ENCODE measurements at regions of chr21 and their contacts with region 1.

Region 1: GRCh38 chr21:15729674-15730483 is at the start of gene USP25:
- DNase-seq: peak; percentile 94
- ATAC-seq: peak; percentile 98 to 99
- H3K4me3 ChIP-seq: peak within 1 kb of the TSS; percentile 74
- H3K27ac ChIP-seq: peak within 1 kb of the TSS; percentile 94
- H3K4me1 ChIP-seq: peaks cover 39% of the 10 kb centered on the region
- H3K27me3 ChIP-seq: no peaks in the 10 kb centered on the region
- CTCF ChIP-seq: peak; percentile 13
- total RNA-seq, gene USP25: 74.4 TPM

Region 2: DNA sequence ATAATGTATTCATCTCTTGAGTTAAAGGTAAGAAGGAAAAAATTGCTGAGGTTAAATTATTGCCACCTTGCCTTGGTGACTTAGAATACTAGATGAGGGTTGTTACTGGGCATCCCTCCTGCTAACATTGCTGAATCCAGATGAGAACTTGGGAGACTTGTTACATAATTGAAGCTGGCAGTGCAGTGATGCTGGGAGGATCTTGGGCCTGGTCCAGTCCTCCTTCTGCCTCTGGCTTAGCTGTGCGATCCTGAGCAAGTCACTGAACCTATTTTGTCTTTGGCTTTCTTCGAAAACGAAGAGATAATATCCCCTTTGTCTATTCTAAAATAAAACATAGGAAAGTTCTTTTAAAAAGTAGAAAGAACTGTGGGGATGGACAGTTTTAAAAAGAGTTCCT is 420.2 kb before region 1 on chr21:
- intact Hi-C with region 1: no loop called
- DNase-seq: no peak
- ATAC-seq: peak in 1 of 2 donors; percentile 41
- H3K4me3 ChIP-seq: no peak overlapping the region
- H3K27ac ChIP-seq: no peak overlapping the region
- H3K4me1 ChIP-seq: no peaks in the 10 kb centered on the region
- H3K27me3 ChIP-seq: no peaks in the 10 kb centered on the region
- CTCF ChIP-seq: no peak

Region 3: DNA sequence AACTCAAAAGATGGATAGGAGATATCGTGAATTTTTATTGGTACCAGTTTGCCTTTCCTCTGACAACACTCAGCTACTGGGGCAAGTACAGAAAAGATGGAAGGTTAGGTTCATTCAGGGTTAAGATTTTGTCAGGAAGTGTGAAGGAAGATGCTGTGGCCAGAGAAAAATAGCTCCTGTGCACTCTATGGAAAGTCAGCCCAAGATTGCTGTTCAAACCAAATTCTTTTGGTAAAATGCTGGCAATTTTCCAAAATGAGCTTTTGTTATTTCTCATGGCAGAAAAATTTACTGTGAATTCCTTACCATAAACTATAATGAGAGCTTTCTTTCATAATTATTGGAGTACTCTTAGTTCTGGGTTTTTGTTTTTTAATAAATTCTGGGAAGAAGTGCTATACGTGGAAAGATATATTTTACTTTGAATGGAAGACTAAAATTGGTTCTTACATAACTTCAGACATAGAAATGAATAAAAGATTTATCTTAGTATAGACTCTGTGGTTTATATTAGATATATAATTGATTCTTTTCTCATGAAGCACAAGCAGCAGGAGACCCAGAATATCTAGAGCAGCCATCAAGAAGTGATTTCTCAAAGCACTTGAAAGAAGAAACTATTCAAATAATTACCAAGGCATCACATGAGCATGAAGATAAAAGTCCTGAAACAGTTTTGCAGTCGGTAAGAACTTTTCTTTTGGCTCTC is 112.1 kb after region 1 on chr21:
- intact Hi-C with region 1: loop called (anchors 10 kb)
- DNase-seq: no peak
- ATAC-seq: no peak
- H3K4me3 ChIP-seq: no peak overlapping the region
- H3K27ac ChIP-seq: no peak overlapping the region
- H3K4me1 ChIP-seq: peaks cover 12% of the 10 kb centered on the region
- H3K27me3 ChIP-seq: no peaks in the 10 kb centered on the region
- CTCF ChIP-seq: no peak